ENCODE measurements at regions of chr16 and their contacts with region 1.

Region 1: DNA sequence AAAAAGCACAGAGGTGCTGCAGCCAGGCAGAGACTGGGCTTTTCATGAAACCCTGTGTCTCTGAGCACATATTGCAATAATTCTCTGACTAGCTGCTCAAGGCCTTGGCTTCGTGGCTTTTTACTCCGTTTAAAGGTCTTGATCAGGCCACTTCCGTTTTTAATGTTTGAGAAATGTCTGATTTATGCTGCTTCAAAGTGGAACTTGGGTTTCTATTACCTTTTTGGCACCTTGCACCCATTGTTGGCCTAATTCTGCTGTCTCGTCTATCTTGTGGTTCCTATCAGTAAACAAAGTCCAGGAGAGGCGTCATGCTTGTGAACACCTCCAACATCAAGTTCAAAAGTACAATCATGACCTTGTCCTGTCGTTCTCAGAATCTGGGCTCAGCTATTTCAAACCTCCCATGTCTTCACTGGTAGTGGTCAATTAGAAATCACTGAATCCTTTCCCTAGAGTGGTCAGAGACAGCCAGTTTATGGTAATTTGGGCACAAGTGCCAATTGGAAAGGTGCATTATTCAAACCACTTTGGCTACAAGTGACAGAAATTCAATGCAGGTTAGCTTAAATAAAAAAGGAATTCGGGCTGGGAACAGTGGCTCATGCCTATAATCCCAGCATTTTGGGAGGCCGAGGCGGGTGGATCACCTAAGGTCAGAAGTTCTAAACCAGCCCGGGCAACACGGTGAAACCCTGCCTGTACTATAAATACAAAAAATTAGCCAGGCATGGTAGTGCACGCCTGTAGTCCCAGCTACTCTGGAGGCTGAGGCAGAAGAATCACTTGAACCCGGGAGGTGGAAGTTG is 33.3 kb upstream of the METTL9 start:
- DNase-seq: no peak
- H3K4me3 ChIP-seq: no peak overlapping the region
- H3K27ac ChIP-seq: no peak overlapping the region
- H3K4me1 ChIP-seq: no peaks in the 10 kb centered on the region
- H3K27me3 ChIP-seq: no peaks in the 10 kb centered on the region
- CTCF ChIP-seq: no peak

Region 2: GRCh38 chr16:22321339-22322001 is 755.4 kb after region 1 on chr16:
- CTCF ChIA-PET with region 1: no interaction called
- POLR2A ChIA-PET with region 1: no interaction called
- intact Hi-C with region 1: loop called (anchors 5 kb)
- DNase-seq: peak; percentile 81
- H3K4me3 ChIP-seq: no peak overlapping the region
- H3K27ac ChIP-seq: no peak overlapping the region
- H3K4me1 ChIP-seq: no peaks in the 10 kb centered on the region
- H3K27me3 ChIP-seq: no peaks in the 10 kb centered on the region
- CTCF ChIP-seq: peak; percentile 98

Region 3: DNA sequence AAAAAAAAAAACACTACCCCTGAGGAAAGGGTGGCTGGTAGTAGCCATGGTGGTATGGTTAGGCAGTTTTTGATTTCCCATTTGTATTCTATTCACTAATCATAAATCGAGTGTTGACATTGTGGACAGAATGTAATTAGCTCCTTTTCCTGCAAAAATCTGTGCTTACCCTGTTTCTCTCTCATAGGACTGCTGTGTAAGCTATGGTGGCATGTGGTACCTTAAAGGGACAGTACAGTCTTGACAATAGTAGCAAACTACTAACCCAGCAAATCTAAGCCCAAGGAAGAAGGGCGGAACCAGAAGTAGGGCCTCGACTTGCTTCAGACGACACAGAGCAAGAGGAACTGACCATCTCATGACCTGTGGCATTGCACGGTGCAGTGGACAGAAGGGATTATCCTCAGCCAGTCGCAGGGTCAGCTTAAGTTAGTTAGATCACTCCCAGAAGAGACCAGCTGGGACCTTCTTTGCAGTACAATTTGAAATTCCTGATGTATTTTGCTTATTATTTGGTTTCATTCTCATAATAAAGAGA is 767.5 kb after region 1 on chr16:
- CTCF ChIA-PET with region 1: no interaction called
- POLR2A ChIA-PET with region 1: interaction called, 14 read pairs
- intact Hi-C with region 1: no loop called
- DNase-seq: no peak
- H3K4me3 ChIP-seq: no peak overlapping the region
- H3K27ac ChIP-seq: no peak overlapping the region
- H3K4me1 ChIP-seq: no peaks in the 10 kb centered on the region
- H3K27me3 ChIP-seq: no peaks in the 10 kb centered on the region
- CTCF ChIP-seq: no peak

Region 4: DNA sequence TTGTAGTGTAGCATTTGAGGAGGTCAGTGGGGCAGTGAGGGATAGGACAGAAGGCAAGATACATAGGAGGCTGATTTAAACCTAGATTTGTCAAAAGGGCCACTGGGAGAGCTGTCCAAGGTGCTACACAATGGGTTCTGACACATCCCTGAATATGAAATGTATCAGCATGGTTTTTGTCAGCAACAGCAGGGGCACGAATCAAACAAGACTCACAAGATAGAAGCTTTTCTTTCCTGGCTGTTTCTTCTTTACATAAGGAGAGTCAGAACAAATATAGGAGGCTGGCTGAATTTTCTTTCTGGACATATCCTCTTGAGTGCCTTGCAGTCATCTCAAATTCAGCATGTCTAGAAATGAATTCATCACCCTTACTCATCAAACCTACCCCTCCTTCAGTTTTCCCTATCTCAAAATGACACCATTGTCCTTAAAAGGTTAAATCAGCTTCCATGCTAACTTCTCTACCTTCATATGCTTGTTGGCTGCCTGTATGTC is 1075.1 kb after region 1 on chr16:
- CTCF ChIA-PET with region 1: no interaction called
- POLR2A ChIA-PET with region 1: no interaction called
- intact Hi-C with region 1: no loop called
- DNase-seq: peak; percentile 47
- H3K4me3 ChIP-seq: no peak overlapping the region
- H3K27ac ChIP-seq: no peak overlapping the region
- H3K4me1 ChIP-seq: no peaks in the 10 kb centered on the region
- H3K27me3 ChIP-seq: peaks cover 54% of the 10 kb centered on the region
- CTCF ChIP-seq: no peak